ENCODE measurements at regions of chr1 and their contacts with region 1.

Region 1: GRCh38 chr1:18597160-18598042 is 33.2 kb upstream of the PAX7 start:
- DNase-seq: peak; percentile 17
- H3K4me3 Mint-ChIP-seq: no peak overlapping the region
- H3K27ac Mint-ChIP-seq: no peak overlapping the region
- H3K4me1 Mint-ChIP-seq: no peaks in the 10 kb centered on the region
- H3K27me3 Mint-ChIP-seq: peaks cover 10% of the 10 kb centered on the region

Region 2: GRCh38 chr1:17922833-17923232 is 674.6 kb before region 1 on chr1:
- intact Hi-C with region 1: no loop called
- DNase-seq: no peak
- H3K4me3 Mint-ChIP-seq: no peak overlapping the region
- H3K27ac Mint-ChIP-seq: no peak overlapping the region
- H3K4me1 Mint-ChIP-seq: no peaks in the 10 kb centered on the region
- H3K27me3 Mint-ChIP-seq: no peaks in the 10 kb centered on the region

Region 3: GRCh38 chr1:18681423-18681835 is 84.0 kb after region 1 on chr1:
- intact Hi-C with region 1: loop called (anchors 1 kb)
- DNase-seq: no peak
- H3K4me3 Mint-ChIP-seq: no peak overlapping the region
- H3K27ac Mint-ChIP-seq: no peak overlapping the region
- H3K4me1 Mint-ChIP-seq: peaks cover 5% of the 10 kb centered on the region
- H3K27me3 Mint-ChIP-seq: peaks cover 6% of the 10 kb centered on the region

Region 4: DNA sequence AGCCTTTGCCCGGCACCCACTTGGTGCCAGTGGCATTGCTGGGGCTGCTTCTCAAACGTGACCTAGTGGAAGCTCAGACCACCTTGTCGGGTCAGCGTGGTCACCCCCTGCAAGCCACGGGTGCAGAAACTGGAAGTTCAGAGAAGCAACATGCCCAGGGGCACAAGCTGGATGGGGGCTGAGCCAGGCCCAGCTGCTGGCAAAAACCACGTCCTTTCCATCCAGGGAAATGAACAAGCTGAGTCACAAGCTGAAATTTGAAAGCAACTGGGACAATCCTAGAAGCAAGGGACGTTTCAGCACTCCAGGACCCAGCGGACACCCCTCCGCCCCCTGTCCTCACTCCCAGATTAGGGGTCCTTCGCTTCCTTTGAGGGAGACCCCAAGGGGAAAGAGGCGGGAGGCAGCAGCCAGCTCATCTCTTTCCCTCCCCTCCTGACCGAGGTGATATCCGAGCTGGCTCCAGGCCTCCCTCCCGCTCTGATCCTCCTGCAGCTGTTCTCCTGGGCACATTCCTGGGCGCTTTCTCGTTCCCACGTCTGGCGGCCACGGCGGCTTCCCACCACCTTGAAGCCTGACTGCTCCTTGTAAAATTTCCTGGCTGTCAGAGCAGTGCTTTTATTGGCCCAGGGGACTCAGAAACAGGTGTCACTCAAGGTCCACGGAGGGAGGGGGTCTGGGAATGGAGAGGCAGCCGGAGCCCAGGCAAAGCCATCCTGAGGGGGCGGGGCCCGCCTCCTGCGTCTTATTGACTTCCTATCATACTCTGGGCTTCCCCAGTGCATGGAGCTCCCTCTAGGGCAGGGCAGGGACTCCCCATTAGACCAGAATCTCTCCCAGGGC is 96.1 kb after region 1 on chr1:
- intact Hi-C with region 1: no loop called
- DNase-seq: no peak
- H3K4me3 Mint-ChIP-seq: no peak overlapping the region
- H3K27ac Mint-ChIP-seq: no peak overlapping the region
- H3K4me1 Mint-ChIP-seq: no peaks in the 10 kb centered on the region
- H3K27me3 Mint-ChIP-seq: peaks cover 13% of the 10 kb centered on the region

Region 5: GRCh38 chr1:18820791-18821641 is 223.6 kb after region 1 on chr1:
- intact Hi-C with region 1: loop called (anchors 1 kb)
- DNase-seq: peak; percentile 22
- H3K4me3 Mint-ChIP-seq: no peak overlapping the region
- H3K27ac Mint-ChIP-seq: no peak overlapping the region
- H3K4me1 Mint-ChIP-seq: peaks cover 4% of the 10 kb centered on the region
- H3K27me3 Mint-ChIP-seq: peaks cover 7% of the 10 kb centered on the region

Region 6: GRCh38 chr1:18875107-18875795 is 277.9 kb after region 1 on chr1:
- intact Hi-C with region 1: loop called (anchors 1 kb)
- DNase-seq: peak; percentile 46
- H3K4me3 Mint-ChIP-seq: no peak overlapping the region
- H3K27ac Mint-ChIP-seq: no peak overlapping the region
- H3K4me1 Mint-ChIP-seq: no peaks in the 10 kb centered on the region
- H3K27me3 Mint-ChIP-seq: no peaks in the 10 kb centered on the region

Region 7: DNA sequence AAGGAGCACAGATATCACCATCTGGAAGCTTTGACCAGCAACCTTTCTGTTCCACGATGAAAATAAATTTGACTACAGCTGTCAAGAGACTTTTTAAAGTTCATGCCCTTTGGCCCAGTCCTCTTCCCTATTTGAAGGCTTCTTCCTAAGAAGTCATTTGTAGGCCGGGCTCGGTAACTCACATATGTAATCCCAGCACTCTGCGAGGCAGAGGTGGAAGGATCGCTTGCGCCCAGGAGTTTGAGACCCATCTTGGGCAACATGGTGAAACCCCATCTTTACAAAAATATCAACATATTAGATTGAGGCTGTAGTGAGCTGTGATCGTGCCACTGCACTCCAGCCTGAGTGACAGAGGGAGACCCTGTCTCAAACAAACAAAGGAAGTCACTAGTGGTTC is 417.4 kb after region 1 on chr1:
- intact Hi-C with region 1: no loop called
- DNase-seq: no peak
- H3K4me3 Mint-ChIP-seq: no peak overlapping the region
- H3K27ac Mint-ChIP-seq: no peak overlapping the region
- H3K4me1 Mint-ChIP-seq: peaks cover 24% of the 10 kb centered on the region
- H3K27me3 Mint-ChIP-seq: peaks cover 18% of the 10 kb centered on the region

Measured in activated T-helper 1 cell treated with anti-CD3 and anti-CD28 coated beads, Interleukin-12 subunit alpha, Interleukin-12 subunit beta, Interleukin-2, Interleukin-4 antibody, amounts not matched to agents 30 ng/mL and 10 ng/mL and 1 ng/mL, durations not matched to agents 14 hours and 24 hours and 36 hours (primary cell).